GM18951 (cell line): ENCODE measurements at regions of chrX and their contacts with region 1.

Region 1: GRCh38 chrX:76279000-76279399 is 106.1 kb downstream of the PBDC1 start:
- POLR2A ChIP-seq: no peak

Region 2: DNA sequence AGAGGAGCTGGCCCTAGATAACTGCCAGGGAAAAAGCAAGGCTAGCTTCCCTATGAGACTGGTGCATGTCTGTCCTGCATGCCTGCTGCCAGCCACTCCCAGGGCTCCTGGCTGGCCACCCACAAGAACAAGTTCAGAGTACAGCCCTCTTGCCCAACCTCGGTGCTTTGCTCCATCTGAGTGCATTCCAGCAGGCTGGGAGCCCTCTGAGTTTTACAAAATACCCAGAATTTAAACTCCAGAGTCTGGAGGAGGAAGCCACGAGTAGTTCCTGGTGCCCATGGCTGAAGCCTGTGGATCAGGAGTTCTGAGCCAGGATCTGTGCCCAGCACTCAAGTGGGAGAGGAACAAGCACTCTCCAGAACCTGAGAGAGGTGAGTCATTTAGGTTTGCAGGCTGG is 605.5 kb before region 1 on chrX:
- in situ Hi-C with region 1: no loop called
- POLR2A ChIP-seq: no peak

Region 3: GRCh38 chrX:75997692-75998091 is 281.3 kb before region 1 on chrX:
- in situ Hi-C with region 1: no loop called
- POLR2A ChIP-seq: no peak

Region 4: DNA sequence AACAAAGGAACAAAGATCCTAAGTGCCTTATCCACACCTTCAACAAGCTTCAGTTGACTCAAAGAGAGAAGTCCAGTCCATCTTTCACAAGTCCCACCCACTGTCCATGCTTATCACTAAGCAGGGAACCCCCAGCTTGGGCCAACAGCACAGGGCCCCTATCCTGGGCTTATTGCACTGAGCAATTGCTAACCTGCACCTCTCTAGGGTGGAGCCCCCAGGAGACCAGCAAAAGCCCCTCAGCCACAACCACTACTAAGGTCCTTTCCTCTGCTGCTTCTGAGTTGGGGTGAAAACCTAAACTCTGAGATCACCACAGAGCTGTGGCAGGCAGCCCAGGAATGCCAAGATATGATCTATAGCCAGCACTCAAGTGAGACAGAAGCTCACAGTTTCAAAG is 202.9 kb before region 1 on chrX:
- in situ Hi-C with region 1: no loop called
- POLR2A ChIP-seq: no peak

Region 5: DNA sequence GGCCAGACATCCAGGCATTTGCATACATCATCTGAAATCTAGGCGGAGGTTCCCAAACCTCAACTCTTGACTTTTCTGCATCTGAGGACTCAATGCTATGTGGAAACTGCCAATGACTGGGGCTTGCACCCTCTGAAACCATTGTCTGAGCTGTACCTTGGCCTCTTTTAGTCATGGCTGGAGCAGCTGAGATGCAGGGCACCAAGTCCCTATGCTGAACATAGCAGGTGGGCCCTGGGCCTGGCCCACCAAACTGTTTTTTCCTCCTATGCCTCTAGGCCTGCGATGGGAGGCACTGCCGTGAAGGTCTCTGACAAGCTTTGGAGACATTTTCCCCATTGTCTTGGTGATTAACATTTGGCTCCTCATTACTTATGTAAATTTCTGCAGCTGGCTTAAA is 83.4 kb before region 1 on chrX:
- in situ Hi-C with region 1: no loop called
- POLR2A ChIP-seq: no peak

Region 6: GRCh38 chrX:76454456-76454927 is 175.5 kb after region 1 on chrX:
- in situ Hi-C with region 1: loop called (anchors 25 kb)
- POLR2A ChIP-seq: no peak